HAP-1 (cell line): ENCODE measurements at regions of chr13 and their contacts with region 1.

Region 1: GRCh38 chr13:30679483-30680330 is 55.6 kb upstream of the ALOX5AP start:
- DNase-seq: peak; percentile 13 to 37
- H3K4me3 ChIP-seq: no peak overlapping the region
- H3K4me1 ChIP-seq: no peaks in the 10 kb centered on the region
- H3K27me3 ChIP-seq: no peaks in the 10 kb centered on the region

Region 2: GRCh38 chr13:30071969-30072817 is 607.5 kb before region 1 on chr13:
- in situ Hi-C with region 1: no loop called
- DNase-seq: no peak
- H3K4me3 ChIP-seq: no peak overlapping the region
- H3K4me1 ChIP-seq: peaks cover 2% of the 10 kb centered on the region; the same call in 1 of the 2 replicates
- H3K27me3 ChIP-seq: no peaks in the 10 kb centered on the region

Region 3: GRCh38 chr13:31044377-31045285 is 364.9 kb after region 1 on chr13:
- in situ Hi-C with region 1: loop called (anchors 25 kb)
- DNase-seq: peak; percentile 63 to 83
- H3K4me3 ChIP-seq: no peak overlapping the region
- H3K4me1 ChIP-seq: peaks cover 11% of the 10 kb centered on the region
- H3K27me3 ChIP-seq: no peaks in the 10 kb centered on the region; the same call in 1 of the 2 replicates